ENCODE measurements at regions of chr15 and their contacts with region 1.

Region 1: GRCh38 chr15:38129531-38130204 is 123.0 kb upstream of the SPRED1 start:
- DNase-seq: no peak

Region 2: GRCh38 chr15:38072348-38073177 is 57.1 kb before region 1 on chr15:
- intact Hi-C with region 1: loop called (anchors 5 kb)
- DNase-seq: peak; percentile 81

Region 3: DNA sequence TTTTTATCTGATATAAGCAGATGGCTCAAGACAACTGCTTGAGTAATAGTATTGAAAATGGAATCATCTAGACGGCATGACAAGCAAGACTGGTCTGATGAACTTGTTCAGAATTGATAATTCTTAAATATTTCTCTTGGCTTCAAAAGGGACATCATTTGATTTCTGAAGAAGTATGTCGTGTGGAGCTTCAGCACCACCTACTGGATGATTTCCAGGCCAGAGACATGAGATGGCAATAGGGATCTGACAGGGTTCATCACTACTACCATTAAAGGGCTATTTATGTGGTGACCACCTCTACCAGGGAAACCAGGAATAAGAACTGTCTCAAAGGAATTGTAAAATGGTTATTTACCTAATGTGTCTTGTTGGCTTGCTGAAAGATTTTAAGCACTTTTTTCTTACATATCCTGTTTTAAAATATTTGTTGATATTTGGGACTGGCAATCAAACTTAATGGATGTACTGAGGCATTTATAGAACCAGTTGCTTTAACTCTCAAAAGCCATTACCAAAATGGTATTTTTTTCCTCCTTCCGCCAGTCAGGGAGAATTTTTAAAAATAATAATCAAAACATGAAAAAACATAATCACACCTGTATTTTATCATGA is 224.8 kb after region 1 on chr15:
- intact Hi-C with region 1: loop called (anchors 10 kb)
- DNase-seq: no peak

Region 4: DNA sequence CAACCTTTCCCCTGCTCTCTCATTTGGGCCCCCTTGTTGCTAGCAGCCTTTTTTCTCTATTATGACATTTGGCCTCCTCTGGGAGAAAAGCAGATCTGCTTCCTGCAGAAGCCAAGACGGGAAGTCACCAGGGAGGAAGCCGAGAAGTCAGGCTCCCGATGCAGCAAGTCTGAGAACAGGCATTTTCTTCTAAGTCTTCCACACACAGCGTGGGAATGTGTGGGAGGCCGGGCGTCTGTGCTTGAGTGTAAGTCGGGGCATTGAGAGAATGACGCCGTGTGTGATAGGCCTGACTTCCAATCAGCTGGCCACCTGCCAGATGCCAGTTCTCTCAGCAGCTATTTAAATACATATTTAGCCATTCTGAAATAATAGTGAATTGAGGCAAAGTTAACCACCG is 248.5 kb after region 1 on chr15:
- intact Hi-C with region 1: loop called (anchors 10 kb)
- DNase-seq: peak; percentile 77

Measured in cardiac septum (tissue), 1 donor.